Activated B cell treated with CpG ODN at 0.5 μM for 24 hours (primary cell): ENCODE measurements at regions of chr11 and their contacts with region 1.

Region 1: DNA sequence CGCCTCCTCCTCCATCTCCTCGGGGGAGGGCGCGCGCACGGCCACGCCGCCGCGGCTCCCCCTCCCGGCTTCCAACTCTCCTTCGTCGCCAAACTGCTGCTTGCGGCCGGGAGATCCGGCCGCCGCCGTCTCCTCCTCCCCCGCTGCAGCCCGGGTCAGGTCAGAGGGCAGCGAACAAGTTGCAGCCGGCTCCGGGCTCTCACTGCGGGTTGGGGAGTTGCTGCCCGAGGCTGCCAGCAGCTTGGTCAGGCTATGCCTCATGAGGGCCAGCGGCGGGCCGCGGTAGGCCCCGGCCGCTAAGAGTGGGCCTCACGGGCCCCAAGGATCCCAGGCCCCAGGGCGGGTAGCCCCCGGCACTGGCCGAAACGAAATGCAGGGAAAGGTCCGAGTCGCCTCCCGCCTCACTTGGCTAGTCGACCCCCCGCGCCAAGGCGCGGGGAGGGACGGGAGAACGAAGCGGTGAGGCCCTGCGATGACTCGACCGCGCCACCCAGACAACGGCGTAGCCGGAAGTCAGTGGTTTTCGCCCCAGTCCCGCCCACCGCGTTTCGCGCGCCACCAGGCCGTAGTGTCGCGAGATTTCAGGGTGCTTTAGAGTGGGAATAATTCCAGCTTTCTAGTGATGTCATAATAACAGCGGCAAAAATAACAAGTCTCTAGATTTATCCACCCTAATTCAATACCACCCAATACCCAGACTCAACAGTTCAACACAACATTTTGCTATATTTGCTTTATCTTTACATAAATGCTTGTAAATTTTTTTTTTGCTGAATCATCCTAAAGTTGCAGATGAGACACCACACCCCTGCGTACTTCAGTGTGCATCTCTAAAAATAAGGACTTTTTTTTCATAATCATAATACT is at the start of gene CREBZF:
- DNase-seq: peak; percentile 96
- ATAC-seq: peak; percentile 86
- H3K4me3 Mint-ChIP-seq: peak within 1 kb of the TSS; percentile 95
- H3K27ac Mint-ChIP-seq: peak within 1 kb of the TSS; percentile 93
- H3K4me1 Mint-ChIP-seq: peaks cover 45% of the 10 kb centered on the region
- H3K27me3 Mint-ChIP-seq: no peaks in the 10 kb centered on the region
- CTCF ChIP-seq: no peak
- total RNA-seq, gene CREBZF: 46.1 and 60.3 TPM in 2 replicates

Region 2: GRCh38 chr11:85123752-85124231 is 541.1 kb before region 1 on chr11:
- CTCF ChIA-PET with region 1: no interaction called
- POLR2A ChIA-PET with region 1: no interaction called
- intact Hi-C with region 1: loop called (anchors 10 kb)
- DNase-seq: no peak
- ATAC-seq: peak; percentile 92
- H3K4me3 Mint-ChIP-seq: peak overlapping the region; percentile 47
- H3K27ac Mint-ChIP-seq: peak overlapping the region; percentile 86
- H3K4me1 Mint-ChIP-seq: peaks cover 20% of the 10 kb centered on the region
- H3K27me3 Mint-ChIP-seq: no peaks in the 10 kb centered on the region
- CTCF ChIP-seq: no peak

Region 3: DNA sequence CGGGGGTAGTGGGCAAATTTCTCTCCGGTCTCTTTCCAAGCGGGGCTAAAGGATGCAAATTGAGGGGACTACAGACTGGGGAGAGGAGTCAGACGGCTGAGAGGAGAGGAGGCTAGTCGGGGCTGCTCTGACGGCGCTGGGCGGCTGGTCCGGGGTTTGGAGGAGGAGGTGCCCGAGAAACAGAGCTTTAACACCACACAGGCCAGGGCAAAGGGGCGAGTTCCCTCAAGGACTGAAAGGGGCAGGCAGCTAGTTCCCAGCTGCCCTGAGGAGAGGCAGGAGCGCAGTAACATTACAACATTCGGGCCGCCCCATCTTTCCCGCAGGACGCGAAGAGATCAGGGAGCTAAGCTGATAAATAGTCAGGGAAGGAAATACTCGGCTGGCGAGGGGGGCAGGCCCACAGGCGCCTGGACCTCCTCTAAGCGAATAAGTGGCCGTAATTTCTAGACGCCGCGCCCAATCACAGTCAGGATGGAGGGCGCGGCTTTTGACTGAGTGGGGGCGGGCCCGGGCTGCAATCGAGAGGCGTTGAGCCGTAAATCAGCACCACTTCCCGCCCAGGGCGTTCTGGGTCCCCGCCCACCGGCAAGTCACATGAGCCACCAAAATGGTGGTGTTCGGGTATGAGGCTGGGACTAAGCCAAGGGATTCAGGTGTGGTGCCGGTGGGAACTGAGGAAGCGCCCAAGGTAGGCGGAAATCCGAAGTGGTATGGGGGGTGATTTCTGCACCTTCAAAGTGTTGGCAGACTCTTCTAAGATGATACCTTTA is 36.7 kb before region 1 on chr11 and contains the start of gene TMEM126B:
- CTCF ChIA-PET with region 1: no interaction called
- POLR2A ChIA-PET with region 1: interaction called, 29 read pairs
- intact Hi-C with region 1: loop called (anchors 1 kb)
- DNase-seq: peak; percentile 89
- ATAC-seq: peak; percentile 98
- H3K4me3 Mint-ChIP-seq: peak within 1 kb of the TSS; percentile 99
- H3K27ac Mint-ChIP-seq: peak within 1 kb of the TSS; percentile 94
- H3K4me1 Mint-ChIP-seq: peaks cover 28% of the 10 kb centered on the region
- H3K27me3 Mint-ChIP-seq: peaks cover 2% of the 10 kb centered on the region
- CTCF ChIP-seq: no peak
- total RNA-seq, gene TMEM126B: 35.5 and 43.4 TPM in 2 replicates

Region 4: GRCh38 chr11:85652786-85653447 is 11.9 kb before region 1 on chr11:
- CTCF ChIA-PET with region 1: interaction called, 3 read pairs
- POLR2A ChIA-PET with region 1: interaction called, 70 read pairs
- intact Hi-C with region 1: loop called (anchors 1 kb)
- DNase-seq: no peak
- ATAC-seq: no peak
- H3K4me3 Mint-ChIP-seq: no peak overlapping the region
- H3K27ac Mint-ChIP-seq: no peak overlapping the region
- H3K4me1 Mint-ChIP-seq: peaks cover 12% of the 10 kb centered on the region
- H3K27me3 Mint-ChIP-seq: no peaks in the 10 kb centered on the region
- CTCF ChIP-seq: no peak

Region 5: DNA sequence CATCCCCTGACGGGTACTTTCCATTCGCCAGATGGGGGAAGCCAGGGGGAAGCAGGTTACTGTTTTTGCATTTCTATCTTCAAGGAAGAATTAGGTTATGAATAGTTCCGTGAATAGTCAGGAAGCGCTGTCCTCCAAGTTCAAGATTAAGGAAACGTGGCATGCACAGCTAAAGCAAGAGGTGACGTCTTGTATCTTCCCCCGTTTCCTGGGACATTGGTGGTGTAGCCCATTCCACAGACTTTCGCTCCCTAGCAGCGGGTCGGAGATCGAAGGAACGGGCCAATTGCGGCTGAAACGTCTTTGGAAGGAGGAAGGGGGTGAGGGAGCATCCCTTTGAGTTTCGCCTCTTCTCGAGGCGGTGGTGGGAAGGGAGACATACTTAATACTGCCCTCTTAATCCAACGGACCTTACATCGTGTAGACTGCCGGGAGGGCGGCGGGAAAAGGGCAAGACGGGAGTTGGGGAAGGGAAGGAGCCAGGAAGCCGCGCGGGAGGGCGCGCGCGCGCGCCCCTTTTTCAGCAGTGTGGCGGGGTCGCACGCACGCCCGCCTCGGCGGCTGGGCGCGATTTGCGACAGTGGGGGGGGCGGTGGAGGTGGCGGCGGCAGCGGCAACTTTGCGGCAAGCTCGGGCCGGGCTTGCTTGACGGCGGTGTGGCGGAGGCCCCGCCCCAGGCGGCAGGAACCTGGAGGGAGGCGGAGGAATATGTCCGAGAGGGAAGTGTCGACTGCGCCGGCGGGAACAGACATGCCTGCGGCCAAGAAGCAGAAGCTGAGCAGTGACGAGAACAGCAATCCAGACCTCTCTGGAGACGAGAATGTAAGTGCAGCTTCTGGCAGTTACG is 579.9 kb after region 1 on chr11 and contains the start of gene EED:
- CTCF ChIA-PET with region 1: no interaction called
- POLR2A ChIA-PET with region 1: no interaction called
- intact Hi-C with region 1: loop called (anchors 1 kb)
- DNase-seq: peak; percentile 90
- ATAC-seq: peak; percentile 87
- H3K4me3 Mint-ChIP-seq: no peak within 1 kb of the TSS
- H3K27ac Mint-ChIP-seq: no peak within 1 kb of the TSS
- H3K4me1 Mint-ChIP-seq: peaks cover 31% of the 10 kb centered on the region
- H3K27me3 Mint-ChIP-seq: no peaks in the 10 kb centered on the region
- CTCF ChIP-seq: no peak
- total RNA-seq, gene EED: 55.2 and 63.7 TPM in 2 replicates

Region 6: DNA sequence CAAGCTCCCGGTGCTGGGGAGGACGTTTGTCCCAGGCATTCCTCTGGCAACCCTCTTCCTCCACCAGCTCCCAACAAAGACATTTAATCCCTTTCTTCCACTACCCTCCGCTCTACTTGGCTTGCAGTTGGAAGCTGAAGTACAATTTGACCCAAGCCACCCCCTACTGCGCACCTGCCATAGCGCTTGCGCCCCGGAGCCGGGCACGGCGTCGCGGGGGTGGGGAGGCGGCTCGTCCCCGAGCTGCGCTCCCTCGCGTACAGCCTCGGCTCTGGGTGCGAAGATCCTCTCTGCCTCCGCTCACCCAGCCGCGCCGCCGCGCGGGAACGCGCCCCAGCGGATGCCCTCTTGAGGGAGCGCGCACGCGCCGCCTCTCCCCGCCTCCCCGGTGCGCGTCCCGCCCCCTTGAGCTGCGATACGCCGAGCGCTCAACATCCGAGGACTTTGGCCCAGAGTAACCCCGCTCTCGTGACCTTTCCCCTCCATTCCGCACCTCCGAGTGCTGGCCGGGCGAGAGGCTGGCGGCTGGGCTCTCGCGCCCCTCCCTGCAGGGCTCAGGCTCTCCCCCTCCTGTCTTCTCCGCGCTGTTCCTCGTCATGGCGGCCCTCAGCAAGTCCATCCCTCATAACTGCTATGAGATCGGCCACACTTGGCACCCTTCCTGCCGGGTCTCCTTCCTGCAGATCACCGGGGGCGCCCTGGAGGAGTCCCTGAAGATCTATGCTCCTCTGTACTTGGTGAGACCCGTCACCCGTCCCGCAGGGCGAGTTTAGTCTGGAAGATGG is 1372.8 kb after region 1 on chr11 and contains the start of gene TMEM135:
- CTCF ChIA-PET with region 1: no interaction called
- POLR2A ChIA-PET with region 1: no interaction called
- intact Hi-C with region 1: loop called (anchors 1 kb)
- DNase-seq: peak; percentile 91
- ATAC-seq: peak; percentile 96
- H3K4me3 Mint-ChIP-seq: peak within 1 kb of the TSS; percentile 99
- H3K27ac Mint-ChIP-seq: peak within 1 kb of the TSS; percentile 75
- H3K4me1 Mint-ChIP-seq: peaks cover 34% of the 10 kb centered on the region
- H3K27me3 Mint-ChIP-seq: no peaks in the 10 kb centered on the region
- CTCF ChIP-seq: no peak
- total RNA-seq, gene TMEM135: 7.4 and 10.1 TPM in 2 replicates